WTC11 (cell line): ENCODE measurements at regions of chr19 and their contacts with region 1.

Region 1: GRCh38 chr19:10876459-10877240 is 5.3 kb downstream of the CARM1 start:
- DNase-seq: no peak
- ATAC-seq: no peak
- H3K4me3 Mint-ChIP-seq: no peak overlapping the region
- H3K27ac Mint-ChIP-seq: peak overlapping the region; percentile 79
- H3K4me1 Mint-ChIP-seq: peaks cover 47% of the 10 kb centered on the region
- H3K27me3 Mint-ChIP-seq: no peaks in the 10 kb centered on the region; the same call in 1 of the 2 replicates
- CTCF ChIP-seq: no peak

Region 2: DNA sequence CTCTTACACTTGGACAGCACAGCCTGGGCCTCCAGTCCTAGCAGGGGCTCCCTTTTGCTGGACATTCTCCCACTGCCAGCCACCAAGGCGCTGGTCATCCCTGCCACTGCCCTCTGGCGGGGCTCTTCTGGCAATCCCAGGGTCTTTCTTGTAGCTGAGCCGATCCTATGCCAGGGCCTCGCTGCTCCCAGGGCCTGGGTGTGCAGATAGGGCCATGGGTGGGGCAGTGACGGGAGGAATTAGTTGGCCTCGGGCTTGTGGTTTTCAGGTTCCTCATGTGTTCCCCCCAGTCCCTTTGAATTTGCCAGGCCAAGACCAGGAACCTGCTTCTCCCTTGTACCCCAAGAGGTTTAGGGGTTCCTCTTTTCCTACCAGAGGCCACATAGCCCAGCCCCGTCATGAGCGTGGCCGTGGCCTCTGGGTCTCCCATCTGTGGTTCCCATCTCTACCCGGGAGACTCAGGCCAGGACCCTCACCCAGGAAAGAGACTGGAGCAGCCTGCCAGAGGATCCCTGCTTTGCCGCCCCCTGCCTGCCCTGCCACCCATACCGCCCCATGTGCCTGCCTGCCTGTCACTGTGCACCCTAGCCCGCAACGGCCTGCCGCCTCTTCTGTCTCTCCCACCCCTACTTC is 66.9 kb before region 1 on chr19:
- CTCF ChIA-PET with region 1: no interaction called
- POLR2A ChIA-PET with region 1: no interaction called
- DNase-seq: no peak
- ATAC-seq: no peak
- H3K4me3 Mint-ChIP-seq: no peak overlapping the region
- H3K27ac Mint-ChIP-seq: no peak overlapping the region
- H3K4me1 Mint-ChIP-seq: no peaks in the 10 kb centered on the region
- H3K27me3 Mint-ChIP-seq: no peaks in the 10 kb centered on the region
- CTCF ChIP-seq: no peak

Region 3: GRCh38 chr19:10891405-10892086 is 14.9 kb after region 1 on chr19:
- CTCF ChIA-PET with region 1: interaction called, 62 read pairs
- POLR2A ChIA-PET with region 1: interaction called, 12 read pairs
- DNase-seq: no peak
- ATAC-seq: peak; percentile 6; the same call in 1 of the 2 replicates
- H3K4me3 Mint-ChIP-seq: peak overlapping the region; percentile 20
- H3K27ac Mint-ChIP-seq: peak overlapping the region; percentile 94
- H3K4me1 Mint-ChIP-seq: peaks cover 70% of the 10 kb centered on the region
- H3K27me3 Mint-ChIP-seq: no peaks in the 10 kb centered on the region
- CTCF ChIP-seq: no peak